Panc1 (cell line): ENCODE measurements at regions of chr1 and their contacts with region 1.

Region 1: DNA sequence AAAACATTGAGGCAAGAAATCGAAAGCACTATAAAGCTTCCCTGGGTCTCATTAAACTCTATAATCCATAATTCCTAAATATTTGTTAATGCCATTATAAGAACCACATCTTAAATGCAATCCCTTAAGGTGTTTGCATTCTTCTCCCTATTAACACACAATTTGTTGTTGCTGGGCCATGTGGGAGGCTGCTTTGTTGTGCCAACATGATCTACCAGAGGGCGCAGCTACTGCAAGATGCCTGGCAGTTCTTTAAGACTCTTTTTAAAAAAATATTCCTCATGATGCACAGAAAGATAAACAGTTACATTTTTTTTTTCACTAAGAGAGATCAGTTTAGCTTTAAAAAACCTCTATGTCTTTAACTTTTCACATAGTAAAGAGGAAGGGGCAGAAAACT is 39.0 kb upstream of the BCAS2 start:
- DNase-seq: no peak
- ATAC-seq: no peak
- H3K4me3 ChIP-seq: no peak overlapping the region
- H3K27ac ChIP-seq: no peak overlapping the region
- H3K4me1 ChIP-seq: no peaks in the 10 kb centered on the region
- H3K27me3 ChIP-seq: no peaks in the 10 kb centered on the region
- CTCF ChIP-seq: no peak; the same call in 1 of the 2 replicates

Region 2: GRCh38 chr1:113871597-113872113 is 748.8 kb before region 1 on chr1 and contains the start of gene PTPN22:
- CTCF ChIA-PET with region 1: no interaction called
- POLR2A ChIA-PET with region 1: no interaction called
- in situ Hi-C with region 1: no loop called
- intact Hi-C with region 1: no loop called
- DNase-seq: no peak
- ATAC-seq: no peak
- H3K4me3 ChIP-seq: no peak within 1 kb of the TSS
- H3K27ac ChIP-seq: no peak within 1 kb of the TSS
- H3K4me1 ChIP-seq: no peaks in the 10 kb centered on the region
- H3K27me3 ChIP-seq: no peaks in the 10 kb centered on the region
- CTCF ChIP-seq: no peak
- total RNA-seq, gene PTPN22: not detected

Region 3: DNA sequence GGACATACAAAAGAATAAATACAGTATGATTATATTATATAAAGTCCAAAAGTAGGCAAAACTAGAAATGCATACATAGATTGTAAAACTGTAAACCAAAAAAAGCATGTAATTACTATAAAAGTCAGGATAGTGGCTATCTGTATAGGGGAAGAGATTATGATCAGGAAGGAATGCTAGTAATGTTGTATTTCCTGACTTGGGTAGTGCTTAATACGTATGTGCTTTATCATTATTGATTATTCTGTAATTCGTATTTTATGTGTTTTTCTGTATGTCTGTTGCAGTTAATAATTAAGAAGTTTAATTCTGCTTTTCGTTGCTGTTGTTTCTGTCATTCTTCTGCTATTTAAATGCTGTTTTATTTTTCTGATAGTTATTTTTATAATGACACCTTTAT is 80.2 kb before region 1 on chr1:
- CTCF ChIA-PET with region 1: no interaction called
- POLR2A ChIA-PET with region 1: interaction called, 10 read pairs
- in situ Hi-C with region 1: no loop called
- intact Hi-C with region 1: no loop called
- DNase-seq: no peak
- ATAC-seq: no peak
- H3K4me3 ChIP-seq: no peak overlapping the region
- H3K27ac ChIP-seq: no peak overlapping the region
- H3K4me1 ChIP-seq: no peaks in the 10 kb centered on the region
- H3K27me3 ChIP-seq: no peaks in the 10 kb centered on the region
- CTCF ChIP-seq: no peak